ENCODE measurements at regions of chr3 and their contacts with region 1.

Region 1: GRCh38 chr3:187777331-187777941 is 32.2 kb upstream of the BCL6 start:
- DNase-seq: peak; percentile 39
- ATAC-seq: peak; percentile 84
- H3K4me3 Mint-ChIP-seq: peak overlapping the region; percentile 69
- H3K27ac Mint-ChIP-seq: peak overlapping the region; percentile 91
- H3K4me1 Mint-ChIP-seq: peaks cover 44% of the 10 kb centered on the region
- H3K27me3 Mint-ChIP-seq: no peaks in the 10 kb centered on the region

Region 2: DNA sequence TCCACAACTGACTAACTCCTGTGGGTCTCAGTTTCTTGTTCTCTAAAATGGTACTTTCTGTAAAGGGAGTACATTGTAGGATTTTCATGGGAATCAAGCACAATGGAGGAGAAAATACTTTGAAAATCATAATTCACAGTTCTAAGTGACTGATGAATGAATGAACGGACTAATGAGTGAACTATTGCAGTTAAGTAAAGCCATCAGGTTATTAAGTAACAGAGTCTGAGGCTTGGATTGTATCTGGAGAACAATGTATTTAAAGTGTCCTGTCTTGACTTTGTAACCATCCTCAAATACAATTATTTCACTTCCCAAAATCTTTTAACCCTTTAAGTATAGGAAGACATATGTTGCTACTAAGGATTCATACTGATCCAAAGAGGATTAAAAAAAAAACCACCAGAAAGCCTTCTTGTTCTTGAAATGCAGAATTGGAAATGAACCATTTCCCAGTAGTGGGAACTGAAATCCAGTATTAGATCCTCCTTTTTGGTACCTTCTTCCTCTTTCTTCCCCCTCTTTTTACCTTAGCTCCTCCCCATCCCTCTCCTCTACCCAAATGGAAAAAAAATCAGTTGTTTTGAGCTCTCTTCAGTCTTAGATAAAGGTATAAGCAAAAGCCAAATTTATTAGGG is 19.0 kb before region 1 on chr3:
- POLR2A ChIA-PET with region 1: no interaction called
- DNase-seq: no peak
- ATAC-seq: no peak
- H3K4me3 Mint-ChIP-seq: no peak overlapping the region
- H3K27ac Mint-ChIP-seq: no peak overlapping the region
- H3K4me1 Mint-ChIP-seq: peaks cover 7% of the 10 kb centered on the region
- H3K27me3 Mint-ChIP-seq: no peaks in the 10 kb centered on the region

Region 3: DNA sequence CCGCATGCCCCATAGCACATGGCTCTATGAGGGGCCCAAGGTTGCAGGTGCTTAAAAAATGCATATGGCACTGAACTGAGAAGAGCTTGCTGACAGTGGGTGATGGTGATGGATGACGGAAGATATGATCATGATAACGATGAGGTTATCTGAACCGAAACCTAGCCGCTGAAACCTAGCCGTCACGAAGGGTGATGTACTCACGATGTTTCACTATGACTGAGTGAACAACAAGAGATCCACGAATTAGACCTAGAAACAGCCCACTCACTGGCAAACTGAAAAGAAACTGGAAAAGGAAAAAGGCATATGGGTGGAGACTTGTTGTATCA is 25.5 kb after region 1 on chr3:
- POLR2A ChIA-PET with region 1: interaction called, 12 read pairs
- DNase-seq: no peak
- ATAC-seq: peak; percentile 50
- H3K4me3 Mint-ChIP-seq: peak overlapping the region; percentile 73
- H3K27ac Mint-ChIP-seq: peak overlapping the region; percentile 95
- H3K4me1 Mint-ChIP-seq: peaks cover 75% of the 10 kb centered on the region
- H3K27me3 Mint-ChIP-seq: no peaks in the 10 kb centered on the region

Region 4: GRCh38 chr3:187813198-187813597 is 35.8 kb after region 1 on chr3:
- POLR2A ChIA-PET with region 1: no interaction called
- DNase-seq: no peak
- ATAC-seq: no peak
- H3K4me3 Mint-ChIP-seq: no peak overlapping the region
- H3K27ac Mint-ChIP-seq: no peak overlapping the region
- H3K4me1 Mint-ChIP-seq: peaks cover 14% of the 10 kb centered on the region
- H3K27me3 Mint-ChIP-seq: peaks cover 2% of the 10 kb centered on the region